Dendritic cell treated with granulocyte-macrophage colony-stimulating factor and Interleukin-4, amounts not matched to agents 40 ng/mL and 50 ng/mL, for 4 days (primary cell): ENCODE measurements at regions of chr11 and their contacts with region 1.

Region 1: GRCh38 chr11:73177778-73178577 is 35.9 kb upstream of the FCHSD2 start:
- H3K4me3 Mint-ChIP-seq: no peak overlapping the region
- H3K27ac Mint-ChIP-seq: peak overlapping the region; percentile 52
- H3K4me1 Mint-ChIP-seq: peaks cover 30% of the 10 kb centered on the region
- H3K27me3 Mint-ChIP-seq: peaks cover 3% of the 10 kb centered on the region

Region 2: GRCh38 chr11:72831513-72832300 is 346.3 kb before region 1 on chr11:
- intact Hi-C with region 1: loop called (anchors 2 kb)
- H3K4me3 Mint-ChIP-seq: no peak overlapping the region
- H3K27ac Mint-ChIP-seq: peak overlapping the region; percentile 15
- H3K4me1 Mint-ChIP-seq: peaks cover 73% of the 10 kb centered on the region
- H3K27me3 Mint-ChIP-seq: no peaks in the 10 kb centered on the region

Region 3: GRCh38 chr11:72848846-72849466 is 329.0 kb before region 1 on chr11:
- intact Hi-C with region 1: loop called (anchors 5 kb)
- H3K4me3 Mint-ChIP-seq: no peak overlapping the region
- H3K27ac Mint-ChIP-seq: no peak overlapping the region
- H3K4me1 Mint-ChIP-seq: no peaks in the 10 kb centered on the region
- H3K27me3 Mint-ChIP-seq: no peaks in the 10 kb centered on the region

Region 4: DNA sequence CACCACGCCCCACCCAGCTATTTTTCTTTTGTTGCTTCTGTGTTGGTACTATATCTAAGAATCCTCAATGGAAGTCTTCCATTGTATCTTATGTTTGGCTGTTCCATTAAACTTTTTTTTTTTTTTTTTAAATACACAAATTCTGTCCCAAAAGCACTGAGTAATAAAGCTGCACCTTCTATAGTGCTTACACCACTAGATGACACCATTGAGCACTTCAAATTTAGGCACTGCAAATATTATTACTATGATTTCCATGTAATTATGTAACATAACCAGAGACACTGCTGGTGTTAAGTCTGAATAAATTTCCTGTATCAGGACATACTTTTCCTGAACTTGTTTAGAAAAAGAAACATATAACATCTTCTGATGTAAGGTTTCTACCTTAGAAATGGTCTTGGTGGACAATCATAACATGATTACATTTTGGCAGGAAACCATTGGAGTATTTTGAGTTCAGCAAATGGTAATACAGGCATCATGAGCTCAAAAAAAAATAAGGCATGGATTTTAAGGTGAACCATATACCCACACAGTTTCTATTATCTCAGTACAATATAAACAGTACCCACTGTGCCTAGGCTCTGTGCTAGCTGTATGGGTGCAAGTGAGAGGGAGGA is 253.3 kb before region 1 on chr11:
- intact Hi-C with region 1: loop called (anchors 2 kb)
- H3K4me3 Mint-ChIP-seq: no peak overlapping the region
- H3K27ac Mint-ChIP-seq: no peak overlapping the region
- H3K4me1 Mint-ChIP-seq: peaks cover 26% of the 10 kb centered on the region
- H3K27me3 Mint-ChIP-seq: no peaks in the 10 kb centered on the region

Region 5: DNA sequence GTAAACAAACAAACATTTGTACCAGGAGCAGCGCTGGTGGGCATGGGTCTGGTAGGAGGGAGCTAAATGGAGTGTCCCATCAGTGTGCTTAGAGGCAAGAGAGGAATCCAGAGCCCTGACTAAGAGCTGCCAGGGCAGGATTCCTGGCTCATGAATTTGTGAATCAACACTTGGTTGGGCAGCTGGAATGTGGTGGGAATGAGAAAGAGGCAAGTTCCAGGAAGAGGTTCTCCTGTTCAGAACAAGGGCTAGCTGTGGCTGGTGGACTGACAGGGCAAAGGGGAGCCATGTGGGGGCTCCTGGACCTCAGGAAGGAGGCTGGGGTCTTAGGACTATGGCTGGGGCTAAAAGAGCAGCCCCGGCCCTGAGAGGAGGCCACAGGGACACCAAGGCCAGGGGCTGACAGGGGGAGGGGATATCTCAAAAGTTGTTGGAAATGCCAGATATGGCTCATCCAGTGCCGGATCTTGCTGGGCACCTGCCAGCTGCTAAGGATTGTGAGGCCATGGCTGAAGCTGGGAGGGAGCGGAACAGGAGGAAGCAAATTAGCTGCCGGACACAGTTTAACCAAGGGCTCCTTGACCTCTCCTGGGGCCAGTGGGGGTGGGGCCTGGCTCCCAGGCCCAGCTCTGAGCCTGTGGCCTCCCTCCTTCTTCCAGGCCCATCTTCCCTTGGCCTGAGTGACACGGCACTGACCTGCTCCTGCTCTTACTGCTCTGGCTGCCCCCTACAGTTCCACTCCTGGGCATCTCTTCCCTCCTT is 79.5 kb after region 1 on chr11:
- intact Hi-C with region 1: no loop called
- H3K4me3 Mint-ChIP-seq: no peak overlapping the region
- H3K27ac Mint-ChIP-seq: peak overlapping the region; percentile 46
- H3K4me1 Mint-ChIP-seq: peaks cover 34% of the 10 kb centered on the region
- H3K27me3 Mint-ChIP-seq: peaks cover 3% of the 10 kb centered on the region